Left lung (tissue), 14 donors: ENCODE measurements at regions of chr21 and their contacts with region 1.

Region 1: GRCh38 chr21:42440187-42440792 is 36.6 kb downstream of the UBASH3A start:
- DNase-seq: no peak
- ATAC-seq: no peak
- H3K4me3 ChIP-seq: no peak overlapping the region
- H3K27ac ChIP-seq: no peak overlapping the region
- H3K4me1 ChIP-seq: no peaks in the 10 kb centered on the region
- H3K27me3 ChIP-seq: peaks cover 0 to 16% of the 10 kb centered on the region in 2 donors
- CTCF ChIP-seq: no peak

Region 2: GRCh38 chr21:42145569-42146272 is 294.6 kb before region 1 on chr21:
- intact Hi-C with region 1: loop called in 1 of 2 experiments (anchors 10 kb)
- DNase-seq: peak; percentile 56 to 81 (median 69)
- ATAC-seq: peak; percentile 93
- H3K4me3 ChIP-seq: no peak overlapping the region
- H3K27ac ChIP-seq: no peak overlapping the region
- H3K4me1 ChIP-seq: peaks cover 0 to 5% of the 10 kb centered on the region in 2 donors
- H3K27me3 ChIP-seq: no peaks in the 10 kb centered on the region
- CTCF ChIP-seq: peak; percentile 83 to 96

Region 3: GRCh38 chr21:42337830-42338728 is 102.2 kb before region 1 on chr21:
- intact Hi-C with region 1: loop called in 1 of 2 experiments (anchors 10 kb)
- DNase-seq: peak; percentile 60 to 89 (median 82)
- ATAC-seq: peak; percentile 99
- H3K4me3 ChIP-seq: no peak overlapping the region
- H3K27ac ChIP-seq: no peak overlapping the region
- H3K4me1 ChIP-seq: peaks cover 0 to 9% of the 10 kb centered on the region in 2 donors
- H3K27me3 ChIP-seq: no peaks in the 10 kb centered on the region
- CTCF ChIP-seq: peak; percentile 45 to 75

Region 4: DNA sequence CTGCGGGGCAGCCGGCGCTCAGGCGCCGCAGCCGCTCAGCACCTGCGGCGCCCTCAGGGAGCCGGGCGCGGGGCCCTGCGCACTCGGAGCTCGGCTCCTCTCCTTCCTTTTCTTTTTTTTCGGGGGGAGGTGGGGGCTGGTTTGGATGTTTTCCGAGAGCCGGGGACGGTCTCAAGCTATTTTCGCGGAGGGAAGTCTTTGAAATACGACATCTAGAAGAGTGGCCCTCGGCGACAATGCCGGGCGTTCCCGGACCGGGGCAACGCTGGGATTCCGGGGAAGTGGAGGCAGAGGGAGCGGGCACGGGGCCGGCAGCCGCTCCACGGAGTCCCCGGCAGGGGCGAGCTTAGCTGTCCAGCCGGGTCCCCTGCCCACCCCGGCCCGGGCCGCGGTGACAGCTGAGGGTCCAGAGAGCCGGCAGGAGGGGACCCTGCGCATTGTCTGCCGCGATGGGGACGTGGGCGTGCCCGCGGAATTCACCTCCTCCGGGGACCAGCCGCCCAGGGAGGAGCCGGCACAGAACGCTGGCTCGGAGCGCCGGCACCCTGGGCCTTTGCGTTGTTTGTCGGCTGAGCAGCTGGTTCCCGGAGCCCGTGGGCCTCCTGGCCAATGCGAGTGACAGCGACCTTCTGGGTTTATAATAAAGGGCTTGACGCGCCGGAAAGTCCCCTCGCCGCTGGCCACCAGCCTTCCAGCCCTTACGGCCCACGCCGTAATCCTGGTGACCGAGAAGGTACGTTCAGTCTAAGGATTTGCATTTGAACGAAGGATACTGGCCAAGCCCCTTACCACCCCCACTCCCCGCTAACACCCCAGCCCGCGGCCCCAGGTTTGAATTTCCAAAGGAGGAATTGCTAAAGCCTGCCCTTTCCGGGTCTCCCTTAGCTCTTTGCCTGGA is 73.9 kb after region 1 on chr21:
- intact Hi-C with region 1: no loop called
- DNase-seq: peak in 3 of 4 donors; percentile 44 to 93 (median 69)
- ATAC-seq: peak; percentile 70
- H3K4me3 ChIP-seq: peak overlapping the region; percentile 71 to 94
- H3K27ac ChIP-seq: peak overlapping the region; percentile 82 to 87
- H3K4me1 ChIP-seq: peaks cover 4 to 28% of the 10 kb centered on the region in 2 donors
- H3K27me3 ChIP-seq: no peaks in the 10 kb centered on the region
- CTCF ChIP-seq: no peak